Naive thymus-derived CD8-positive, alpha-beta T cell (primary cell): ENCODE measurements at regions of chr1 and their contacts with region 1.

Region 1: DNA sequence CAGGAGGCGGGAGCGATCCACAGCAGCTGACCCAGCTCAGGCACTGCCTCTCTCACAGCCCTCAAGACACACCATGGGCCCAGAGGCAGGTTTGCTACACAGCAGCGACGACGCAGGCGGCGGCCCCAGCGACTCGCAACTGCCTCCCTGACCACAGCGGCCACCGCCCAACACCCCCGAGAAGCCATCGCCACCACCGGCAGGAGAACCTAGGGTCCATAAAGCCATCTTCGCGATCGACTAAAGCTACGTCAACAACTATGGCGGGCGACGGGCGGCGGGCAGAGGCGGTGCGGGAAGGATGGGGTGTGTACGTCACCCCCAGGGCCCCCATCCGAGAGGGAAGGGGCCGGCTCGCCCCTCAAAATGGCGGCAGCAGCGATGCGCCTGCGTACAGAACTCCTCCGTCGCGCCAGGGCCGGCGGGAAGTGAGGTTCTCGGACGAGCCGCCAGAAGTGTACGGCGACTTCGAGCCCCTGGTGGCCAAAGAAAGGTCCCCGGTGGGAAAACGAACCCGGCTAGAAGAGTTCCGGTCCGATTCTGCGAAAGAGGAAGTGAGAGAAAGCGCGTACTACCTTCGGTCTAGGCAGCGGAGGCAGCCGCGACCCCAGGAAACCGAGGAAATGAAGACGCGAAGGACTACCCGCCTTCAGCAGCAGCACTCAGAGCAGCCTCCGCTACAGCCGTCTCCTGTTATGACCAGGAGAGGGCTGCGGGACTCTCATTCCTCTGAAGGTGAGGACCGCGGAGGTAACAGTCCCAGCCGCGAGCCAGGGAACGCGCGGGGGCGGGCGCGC is at the start of gene TOR1AIP1:
- DNase-seq: peak; percentile 93 to 98 (median 98)
- ATAC-seq: peak; percentile 73 to 75
- H3K4me3 Mint-ChIP-seq: peak within 1 kb of the TSS; percentile 91 to 100 (median 95)
- H3K27ac Mint-ChIP-seq: peak within 1 kb of the TSS; percentile 99 to 100 (median 100)
- H3K4me1 Mint-ChIP-seq: peaks cover 14 to 67% (median 55%) of the 10 kb centered on the region in 4 donors
- H3K27me3 Mint-ChIP-seq: no peaks in the 10 kb centered on the region
- polyA plus RNA-seq, gene TOR1AIP1: 46.9 to 63.0 (median 55.1) TPM

Region 2: GRCh38 chr1:179814546-179814838 is 67.9 kb before region 1 on chr1:
- POLR2A ChIA-PET with region 1: interaction called, 18 read pairs
- DNase-seq: no peak
- ATAC-seq: peak in 1 of 2 donors; percentile 58
- H3K4me3 Mint-ChIP-seq: peak overlapping the region; percentile 90 to 98 (median 94)
- H3K27ac Mint-ChIP-seq: peak overlapping the region; percentile 73 to 99 (median 96)
- H3K4me1 Mint-ChIP-seq: peaks cover 10 to 27% (median 23%) of the 10 kb centered on the region in 4 donors
- H3K27me3 Mint-ChIP-seq: peaks cover 0 to 21% (median 4%) of the 10 kb centered on the region in 5 donors

Region 3: DNA sequence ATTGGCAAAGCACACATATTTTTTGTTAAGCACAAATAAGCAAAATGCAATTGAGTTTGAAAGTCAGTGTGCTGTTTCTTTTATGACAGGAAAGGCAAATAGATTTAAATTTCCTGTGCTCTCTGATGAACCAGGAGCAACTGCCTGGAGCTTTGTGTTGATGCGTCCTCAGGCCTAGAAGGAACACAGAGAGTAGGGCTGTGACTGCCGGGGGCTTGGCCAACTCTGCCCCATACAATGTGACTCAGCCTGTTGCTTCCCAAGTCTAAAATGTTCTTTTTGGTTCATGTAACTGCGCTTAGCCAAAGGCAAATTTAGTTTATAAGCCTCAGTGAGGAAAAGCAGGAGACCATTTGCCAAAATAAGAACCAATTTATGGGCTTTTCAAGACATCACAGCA is 42.3 kb before region 1 on chr1:
- POLR2A ChIA-PET with region 1: no interaction called
- DNase-seq: no peak
- ATAC-seq: no peak
- H3K4me3 Mint-ChIP-seq: no peak overlapping the region
- H3K27ac Mint-ChIP-seq: no peak overlapping the region
- H3K4me1 Mint-ChIP-seq: peaks cover 0 to 5% (median under 1%) of the 10 kb centered on the region in 4 donors
- H3K27me3 Mint-ChIP-seq: no peaks in the 10 kb centered on the region

Region 4: DNA sequence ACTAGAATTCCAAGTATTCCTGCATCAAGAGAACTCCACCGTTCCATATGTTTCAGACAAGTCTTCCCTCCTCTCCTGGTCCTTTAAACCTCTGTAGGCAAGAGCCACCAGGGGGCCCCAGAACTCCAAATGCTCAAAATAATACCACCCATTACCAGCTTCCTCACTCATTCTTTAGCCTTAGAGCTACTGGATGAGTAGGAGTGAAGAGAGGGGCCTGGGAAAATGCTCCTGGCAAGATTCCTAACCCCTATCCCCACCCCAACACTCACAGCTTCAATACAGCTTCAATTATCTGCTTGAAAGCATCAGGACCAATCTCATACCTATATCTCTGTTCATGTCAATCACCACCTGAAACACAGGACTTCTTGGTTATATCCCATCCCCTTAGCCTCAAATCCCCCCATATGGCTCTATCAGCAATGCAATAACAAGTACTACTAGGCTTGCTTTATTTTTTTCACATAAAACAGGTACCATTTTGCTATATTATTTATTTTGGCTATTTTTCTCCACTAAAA is 14.6 kb before region 1 on chr1:
- POLR2A ChIA-PET with region 1: interaction called, 12 read pairs
- DNase-seq: peak; percentile 10 to 64 (median 48)
- ATAC-seq: peak; percentile 81 to 84
- H3K4me3 Mint-ChIP-seq: no peak overlapping the region
- H3K27ac Mint-ChIP-seq: peak overlapping the region in 7 of 10 donors; percentile 2 to 46 (median 9)
- H3K4me1 Mint-ChIP-seq: peaks cover 9 to 30% (median 19%) of the 10 kb centered on the region in 4 donors
- H3K27me3 Mint-ChIP-seq: no peaks in the 10 kb centered on the region

Region 5: DNA sequence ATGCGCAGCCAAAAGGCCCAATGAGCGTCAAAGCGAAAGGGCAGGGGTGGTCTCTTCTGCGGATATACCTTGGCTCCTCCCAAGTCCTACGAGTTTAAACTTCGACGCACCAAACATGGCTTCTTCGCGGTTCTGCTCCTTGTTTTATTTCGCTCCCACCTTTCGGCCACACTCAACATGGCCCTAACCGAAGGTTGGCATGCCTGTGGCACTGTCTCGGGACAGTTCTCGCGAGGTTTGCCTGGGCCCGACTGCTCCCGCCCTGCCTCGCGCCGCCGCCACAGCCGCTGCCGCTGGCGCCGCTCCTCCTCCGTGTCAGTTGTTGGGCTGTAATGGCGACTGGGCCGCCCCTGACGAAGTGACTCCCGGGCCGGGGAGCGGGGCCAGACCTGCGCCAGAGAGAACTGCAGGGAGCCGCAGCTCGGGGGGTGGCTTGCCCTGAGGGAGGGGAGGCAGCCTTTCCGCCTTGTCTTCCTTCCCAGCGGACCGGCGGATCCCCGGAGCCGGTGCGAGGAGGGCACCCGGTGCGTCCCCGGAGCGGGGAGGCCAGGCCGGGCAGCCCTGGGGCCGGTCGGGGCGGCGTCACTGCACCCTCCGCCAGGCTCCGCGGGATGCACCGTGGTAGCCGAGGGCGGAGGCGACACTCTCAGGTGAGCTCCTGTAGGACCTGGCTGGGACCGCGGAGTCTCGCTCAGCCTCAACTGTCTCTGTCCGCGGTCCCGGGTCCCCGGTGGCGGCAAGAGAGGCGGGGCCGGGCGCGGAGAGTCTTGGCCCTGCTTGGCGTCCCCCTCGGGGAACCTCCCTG is 72.3 kb after region 1 on chr1 and contains the start of gene CEP350:
- POLR2A ChIA-PET with region 1: interaction called, 140 read pairs
- DNase-seq: peak; percentile 92 to 100 (median 98)
- ATAC-seq: peak; percentile 85 to 88
- H3K4me3 Mint-ChIP-seq: peak within 1 kb of the TSS; percentile 81 to 97 (median 92)
- H3K27ac Mint-ChIP-seq: peak within 1 kb of the TSS; percentile 87 to 98 (median 96)
- H3K4me1 Mint-ChIP-seq: peaks cover 17 to 70% (median 53%) of the 10 kb centered on the region in 4 donors
- H3K27me3 Mint-ChIP-seq: no peaks in the 10 kb centered on the region
- polyA plus RNA-seq, gene CEP350: 20.2 to 52.0 (median 31.8) TPM

Region 6: DNA sequence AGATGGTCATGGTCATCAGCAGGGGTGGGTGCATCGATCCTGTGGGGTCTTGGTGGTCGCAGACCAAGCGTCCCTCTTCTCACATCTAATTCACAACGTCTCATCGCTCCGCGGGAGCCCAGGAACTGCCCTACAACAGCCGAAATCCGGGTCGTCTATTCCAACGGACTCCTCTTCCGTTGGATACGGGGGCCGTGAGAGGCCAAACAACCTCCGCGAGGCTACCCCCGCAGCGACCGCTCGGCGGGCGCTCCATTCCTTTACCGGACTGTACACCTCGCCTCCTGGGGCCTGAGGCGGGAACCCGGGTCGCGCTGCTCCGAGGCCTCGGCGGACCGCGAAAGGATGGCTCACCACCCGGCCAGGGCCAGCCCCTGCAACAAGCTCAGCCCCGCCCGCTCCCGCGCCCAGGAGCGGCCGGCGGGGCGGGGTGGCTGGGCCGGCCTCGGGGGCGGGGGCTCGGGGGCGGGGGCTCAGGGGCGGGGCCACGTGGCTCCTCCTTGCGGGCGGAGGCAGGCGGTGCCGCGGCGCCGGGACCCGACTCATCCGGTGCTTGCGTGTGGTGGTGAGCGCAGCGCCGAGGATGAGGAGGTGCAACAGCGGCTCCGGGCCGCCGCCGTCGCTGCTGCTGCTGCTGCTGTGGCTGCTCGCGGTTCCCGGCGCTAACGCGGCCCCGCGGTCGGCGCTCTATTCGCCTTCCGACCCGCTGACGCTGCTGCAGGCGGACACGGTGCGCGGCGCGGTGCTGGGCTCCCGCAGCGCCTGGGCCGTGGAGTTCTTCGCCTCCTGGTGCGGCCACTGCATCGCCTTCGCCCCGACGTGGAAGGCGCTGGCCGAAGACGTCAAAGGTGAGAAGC is 272.1 kb after region 1 on chr1 and contains the start of gene QSOX1:
- POLR2A ChIA-PET with region 1: interaction called, 14 read pairs
- DNase-seq: peak; percentile 81 to 93 (median 86)
- ATAC-seq: peak; percentile 95 to 96
- H3K4me3 Mint-ChIP-seq: peak within 1 kb of the TSS; percentile 90 to 95 (median 93)
- H3K27ac Mint-ChIP-seq: peak within 1 kb of the TSS; percentile 77 to 96 (median 93)
- H3K4me1 Mint-ChIP-seq: peaks cover 26 to 48% (median 38%) of the 10 kb centered on the region in 4 donors
- H3K27me3 Mint-ChIP-seq: no peaks in the 10 kb centered on the region
- polyA plus RNA-seq, gene QSOX1: 8.1 to 11.4 (median 9.8) TPM

Region 7: GRCh38 chr1:180502360-180503273 is 620.2 kb after region 1 on chr1 and contains the start of gene ACBD6:
- POLR2A ChIA-PET with region 1: interaction called, 11 read pairs
- DNase-seq: peak; percentile 70 to 91 (median 87)
- ATAC-seq: peak; percentile 88 to 89
- H3K4me3 Mint-ChIP-seq: peak within 1 kb of the TSS; percentile 93 to 97 (median 96)
- H3K27ac Mint-ChIP-seq: peak within 1 kb of the TSS; percentile 93 to 99 (median 98)
- H3K4me1 Mint-ChIP-seq: peaks cover 19 to 43% (median 35%) of the 10 kb centered on the region in 4 donors
- H3K27me3 Mint-ChIP-seq: no peaks in the 10 kb centered on the region
- polyA plus RNA-seq, gene ACBD6: 45.8 to 46.4 (median 46.4) TPM